ENCODE measurements at regions of chr11 and their contacts with region 1.

Region 1: DNA sequence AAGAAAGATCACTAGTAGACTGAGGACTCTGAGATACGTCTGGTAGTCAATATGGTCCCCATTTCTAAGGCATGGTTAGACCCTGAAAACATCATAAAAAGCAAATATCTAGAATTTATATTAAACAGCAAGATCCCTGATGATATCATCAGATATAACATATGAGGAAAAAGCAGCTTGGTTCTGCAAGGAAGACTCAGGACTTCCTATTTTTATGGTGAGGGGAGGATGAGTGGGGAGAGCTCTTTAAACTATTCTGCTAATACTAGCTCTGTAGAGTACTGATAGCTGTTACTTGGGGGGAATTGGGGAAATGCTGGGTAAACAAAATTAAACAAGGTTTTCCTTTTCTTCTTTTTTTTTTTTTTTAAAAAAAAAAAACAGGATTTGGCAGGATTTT is 235.8 kb downstream of the SWAP70 start:
- DNase-seq: no peak
- ATAC-seq: no peak
- H3K4me3 ChIP-seq: no peak overlapping the region
- H3K27ac ChIP-seq: peak overlapping the region; percentile 100
- H3K4me1 ChIP-seq: no peaks in the 10 kb centered on the region; the same call in 1 of the 2 replicates
- H3K27me3 ChIP-seq: no peaks in the 10 kb centered on the region
- CTCF ChIP-seq: no peak

Region 2: DNA sequence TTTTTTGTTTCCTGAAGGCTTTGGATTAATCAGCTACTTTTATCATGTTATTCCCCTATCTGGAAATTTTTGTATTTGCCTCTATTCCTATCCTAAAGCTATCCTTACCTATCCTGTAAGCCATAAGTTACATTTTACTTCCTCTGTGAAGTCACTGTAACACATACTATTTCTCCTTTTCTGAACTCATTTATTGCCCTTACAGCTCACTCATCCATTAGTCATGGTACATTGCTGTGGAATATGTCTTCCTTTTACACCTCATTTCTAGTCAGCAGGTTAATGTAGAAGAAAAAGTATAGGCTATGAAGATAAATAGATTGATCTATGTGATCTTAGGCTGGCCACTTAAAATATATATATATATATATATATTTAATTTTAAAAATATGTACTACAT is 207.8 kb before region 1 on chr11:
- CTCF ChIA-PET with region 1: no interaction called
- POLR2A ChIA-PET with region 1: no interaction called
- in situ Hi-C with region 1: no loop called
- intact Hi-C with region 1: no loop called
- DNase-seq: peak; percentile 56
- ATAC-seq: peak; percentile 39; the same call in 1 of the 2 replicates
- H3K4me3 ChIP-seq: no peak overlapping the region
- H3K27ac ChIP-seq: no peak overlapping the region
- H3K4me1 ChIP-seq: peaks cover 33% of the 10 kb centered on the region
- H3K27me3 ChIP-seq: no peaks in the 10 kb centered on the region
- CTCF ChIP-seq: no peak

Region 3: DNA sequence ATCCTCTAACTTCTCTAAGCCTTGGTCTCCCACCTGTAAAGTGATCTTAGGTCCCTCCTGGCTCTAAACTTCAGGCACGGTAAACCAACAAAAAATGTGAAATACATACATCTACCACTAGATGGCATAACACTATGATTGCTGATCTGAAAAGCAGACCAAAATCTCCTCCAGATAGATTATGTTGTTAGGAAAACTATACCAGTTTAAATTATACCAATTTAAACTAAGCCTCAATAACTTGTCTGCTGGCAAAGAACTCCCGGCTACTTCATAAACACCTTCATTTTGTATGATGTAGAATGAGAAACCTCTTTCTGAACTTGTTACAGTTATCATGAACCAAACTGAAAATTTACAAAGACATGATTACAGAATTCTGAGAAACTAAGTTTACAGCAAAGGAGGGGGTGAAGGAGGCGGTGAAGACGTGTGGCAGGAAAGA is 308.5 kb after region 1 on chr11:
- CTCF ChIA-PET with region 1: no interaction called
- POLR2A ChIA-PET with region 1: interaction called, 10 read pairs
- in situ Hi-C with region 1: no loop called
- intact Hi-C with region 1: no loop called
- DNase-seq: peak; percentile 67
- ATAC-seq: peak; percentile 91
- H3K4me3 ChIP-seq: no peak overlapping the region
- H3K27ac ChIP-seq: peak overlapping the region; percentile 77
- H3K4me1 ChIP-seq: peaks cover 28% of the 10 kb centered on the region
- H3K27me3 ChIP-seq: no peaks in the 10 kb centered on the region
- CTCF ChIP-seq: peak; percentile 86; the same call in 1 of the 2 replicates